HEK293 (cell line): ENCODE measurements at regions of chr1 and their contacts with region 1.

Region 1: GRCh38 chr1:161225534-161226319 is at the start of gene TOMM40L:
- H3K4me3 ChIP-seq: peak within 1 kb of the TSS; percentile 84
- H3K27ac ChIP-seq: peak within 1 kb of the TSS; percentile 26; the same call in 1 of the 2 replicates
- H3K4me1 ChIP-seq: peaks cover 4% of the 10 kb centered on the region; the same call in 1 of the 2 replicates
- CTCF ChIP-seq: peak; percentile 74

Region 2: DNA sequence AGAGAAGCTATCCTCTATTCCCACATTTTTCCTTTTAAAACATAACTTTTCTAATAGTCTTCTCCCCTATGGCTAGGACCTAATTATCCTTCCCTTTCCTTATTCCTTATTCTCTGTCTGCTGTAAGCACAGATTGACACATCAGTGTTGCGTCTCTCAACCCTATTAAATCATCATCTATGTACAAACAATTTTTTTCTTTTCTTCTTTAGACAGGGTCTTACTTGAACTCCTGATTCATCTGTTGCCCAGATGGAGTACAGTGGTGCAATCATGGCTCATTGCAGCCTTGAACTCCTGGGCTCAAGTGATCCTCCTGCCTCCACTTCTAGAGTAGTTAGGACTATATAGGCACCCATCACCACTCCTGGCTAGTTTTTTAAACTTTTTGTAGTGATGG is 119.3 kb before region 1 on chr1:
- CTCF ChIA-PET with region 1: no interaction called
- POLR2A ChIA-PET with region 1: no interaction called
- H3K4me3 ChIP-seq: no peak overlapping the region
- H3K27ac ChIP-seq: no peak overlapping the region
- H3K4me1 ChIP-seq: no peaks in the 10 kb centered on the region
- CTCF ChIP-seq: no peak

Region 3: DNA sequence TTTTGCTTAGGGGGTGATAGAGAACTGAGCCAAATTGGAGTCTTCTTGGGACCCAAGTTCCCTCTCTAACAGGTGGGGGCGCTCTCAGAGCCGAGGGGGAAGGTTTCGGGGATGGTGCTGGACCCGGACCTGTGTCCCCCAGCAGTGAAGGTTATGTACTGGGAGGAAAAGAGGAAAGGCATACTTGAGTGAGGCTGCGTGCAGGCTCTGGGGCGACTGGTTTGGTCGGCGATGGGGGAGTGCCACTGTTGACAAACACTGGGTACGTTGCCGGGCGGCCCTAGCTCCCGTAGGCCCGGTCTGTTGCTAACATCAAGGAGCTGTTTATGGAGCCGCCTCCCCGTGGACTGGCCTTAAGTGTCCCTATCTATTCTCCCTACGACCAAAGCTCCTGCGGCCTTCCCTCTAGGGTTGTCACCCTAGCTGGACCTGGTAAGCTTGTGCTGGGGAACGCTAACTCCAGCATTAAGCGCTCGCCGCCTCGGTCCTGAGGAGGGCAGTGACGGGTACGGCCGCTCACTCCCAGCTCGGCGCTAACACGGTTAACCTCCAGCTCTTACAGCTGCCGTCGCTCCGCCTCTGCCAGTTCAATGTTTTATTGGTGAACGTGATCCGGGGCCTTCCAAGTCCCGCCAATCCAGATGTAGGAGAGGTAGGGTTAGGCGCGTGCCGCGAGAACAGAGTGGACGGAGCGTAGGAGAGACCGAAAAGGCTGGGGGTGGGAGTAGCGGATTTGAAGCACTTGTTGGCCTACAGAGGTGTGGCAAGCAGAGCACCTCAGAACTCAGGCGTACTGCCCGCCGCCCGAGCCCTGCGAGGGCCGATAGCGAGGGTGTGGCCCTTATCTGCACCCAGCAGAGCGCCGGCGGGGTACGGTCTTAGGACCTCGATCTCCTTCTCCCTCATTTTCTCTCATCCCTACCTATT is 59.7 kb before region 1 on chr1 and contains the start of gene PPOX:
- CTCF ChIA-PET with region 1: interaction called, 4 read pairs
- POLR2A ChIA-PET with region 1: interaction called, 13 read pairs
- H3K4me3 ChIP-seq: peak within 1 kb of the TSS; percentile 58
- H3K27ac ChIP-seq: peak within 1 kb of the TSS; percentile 39; the same call in 1 of the 2 replicates
- H3K4me1 ChIP-seq: peaks cover 3% of the 10 kb centered on the region; the same call in 1 of the 2 replicates
- CTCF ChIP-seq: peak; percentile 70

Region 4: DNA sequence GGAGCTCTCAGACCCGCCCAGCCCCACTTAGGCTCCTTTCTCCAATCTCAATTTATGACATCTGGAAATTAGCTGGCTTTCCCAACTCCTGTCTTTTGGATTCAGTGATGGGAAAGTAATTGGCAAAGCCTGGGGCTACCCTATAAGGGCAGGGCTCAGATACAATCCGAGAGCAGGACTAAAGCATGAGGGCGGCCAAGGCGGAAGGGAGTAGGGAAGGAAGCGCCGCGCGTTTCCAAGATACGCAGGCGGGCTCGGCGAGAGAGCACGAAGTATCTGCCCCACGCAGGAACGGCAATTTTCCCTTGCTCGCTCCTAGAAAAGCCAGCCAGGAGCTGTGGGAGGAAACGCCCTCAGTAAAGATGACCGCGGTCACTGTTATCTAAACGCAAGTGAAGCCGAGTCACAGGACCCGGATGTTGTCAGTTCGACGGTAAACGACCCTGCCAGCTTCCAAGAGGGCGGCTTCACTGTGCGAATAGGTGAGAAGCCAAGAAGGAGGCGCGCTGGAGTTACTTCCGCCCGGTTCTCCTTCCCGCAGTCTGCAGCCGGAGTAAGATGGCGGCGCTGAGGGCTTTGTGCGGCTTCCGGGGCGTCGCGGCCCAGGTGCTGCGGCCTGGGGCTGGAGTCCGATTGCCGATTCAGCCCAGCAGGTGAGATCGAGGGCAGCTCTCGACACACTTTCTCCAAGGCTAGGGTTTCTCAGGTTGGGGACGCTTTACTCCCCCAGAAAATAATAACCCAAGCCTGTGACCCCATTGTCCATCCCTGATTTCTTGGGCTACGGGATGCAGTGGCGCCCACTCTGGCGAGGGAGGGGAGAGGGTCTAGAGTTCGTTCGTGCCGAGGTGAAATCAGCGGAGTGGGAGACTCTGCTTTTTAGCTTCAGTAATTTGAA is 23.6 kb before region 1 on chr1 and contains the start of gene NDUFS2:
- CTCF ChIA-PET with region 1: interaction called, 82 read pairs
- POLR2A ChIA-PET with region 1: interaction called, 22 read pairs
- H3K4me3 ChIP-seq: peak within 1 kb of the TSS; percentile 56
- H3K27ac ChIP-seq: peak within 1 kb of the TSS; percentile 72
- H3K4me1 ChIP-seq: peaks cover 9% of the 10 kb centered on the region; the same call in 1 of the 2 replicates
- CTCF ChIP-seq: peak; percentile 79

Region 5: DNA sequence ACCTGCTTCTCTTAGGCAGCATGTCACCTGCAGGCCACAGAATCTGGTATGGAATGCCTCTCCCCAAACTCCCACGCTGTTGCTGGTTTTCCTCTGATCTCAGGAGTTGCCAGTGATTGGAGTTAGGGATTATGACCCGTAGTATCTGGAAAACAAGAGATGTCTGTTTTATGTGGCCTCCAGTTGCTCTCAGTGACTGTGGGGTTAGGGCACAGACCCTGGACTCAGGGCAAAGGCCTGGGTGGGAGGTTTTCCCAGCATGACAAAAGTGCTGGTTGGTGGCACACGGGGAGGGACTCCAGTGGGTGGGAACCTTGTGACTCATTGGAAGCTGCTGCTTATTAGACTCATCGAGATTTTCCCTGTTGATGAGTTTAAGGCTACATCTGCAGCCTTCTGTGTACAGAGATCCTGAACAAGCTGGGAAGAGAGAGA is 12.3 kb after region 1 on chr1 and contains the start of gene NR1I3:
- CTCF ChIA-PET with region 1: interaction called, 57 read pairs
- POLR2A ChIA-PET with region 1: interaction called, 8 read pairs
- H3K4me3 ChIP-seq: no peak within 1 kb of the TSS
- H3K27ac ChIP-seq: no peak within 1 kb of the TSS
- H3K4me1 ChIP-seq: no peaks in the 10 kb centered on the region
- CTCF ChIP-seq: no peak

Region 6: DNA sequence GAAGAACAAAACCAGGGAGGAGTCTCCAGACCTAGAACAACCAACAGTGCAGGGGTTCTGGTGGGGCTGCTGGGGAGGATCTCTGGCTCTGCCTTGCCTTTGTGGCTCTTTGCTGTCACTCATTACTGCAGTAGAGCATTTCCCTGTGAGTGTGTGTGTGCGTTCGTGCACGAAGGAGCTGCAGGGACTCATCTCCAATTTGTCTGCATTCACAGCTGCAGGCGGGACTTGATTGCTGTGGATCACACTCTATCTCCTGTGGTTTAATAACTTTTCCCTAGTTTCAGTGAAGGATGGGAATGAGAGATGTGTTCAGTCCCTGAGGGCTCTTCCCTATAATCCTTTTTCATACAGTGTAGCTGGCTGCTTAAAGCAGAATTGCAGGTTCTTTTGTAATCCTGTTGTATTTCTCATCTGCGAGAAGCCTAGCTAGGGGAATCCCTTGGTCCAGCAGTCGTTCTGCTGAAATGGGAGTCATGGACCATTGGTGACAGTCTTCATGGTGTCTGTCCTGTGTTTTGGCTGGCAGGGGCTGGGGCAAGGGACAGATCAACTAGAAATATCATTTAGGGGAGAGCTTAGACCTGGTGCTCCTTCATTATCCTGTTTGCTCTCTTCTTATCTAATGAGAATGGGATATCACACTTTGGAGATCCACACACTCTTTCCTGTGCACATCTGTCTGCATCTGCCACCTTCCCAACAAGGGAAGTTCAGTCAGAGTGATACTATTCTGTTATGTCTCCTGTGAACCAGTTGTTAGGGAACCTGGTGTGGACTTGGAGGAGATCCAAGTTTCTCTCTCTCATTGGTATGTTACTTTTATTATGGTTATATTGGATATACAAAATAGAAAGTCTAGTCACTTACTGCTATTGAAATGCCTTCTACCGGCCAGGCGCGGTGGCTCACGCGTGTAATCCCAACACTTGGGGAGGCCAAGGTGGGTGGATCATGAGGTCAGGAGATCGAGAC is 35.8 kb after region 1 on chr1:
- CTCF ChIA-PET with region 1: interaction called, 11 read pairs
- POLR2A ChIA-PET with region 1: interaction called, 3 read pairs
- H3K4me3 ChIP-seq: no peak overlapping the region
- H3K27ac ChIP-seq: no peak overlapping the region
- H3K4me1 ChIP-seq: peaks cover 10% of the 10 kb centered on the region; the same call in 1 of the 2 replicates
- CTCF ChIP-seq: no peak

Region 7: DNA sequence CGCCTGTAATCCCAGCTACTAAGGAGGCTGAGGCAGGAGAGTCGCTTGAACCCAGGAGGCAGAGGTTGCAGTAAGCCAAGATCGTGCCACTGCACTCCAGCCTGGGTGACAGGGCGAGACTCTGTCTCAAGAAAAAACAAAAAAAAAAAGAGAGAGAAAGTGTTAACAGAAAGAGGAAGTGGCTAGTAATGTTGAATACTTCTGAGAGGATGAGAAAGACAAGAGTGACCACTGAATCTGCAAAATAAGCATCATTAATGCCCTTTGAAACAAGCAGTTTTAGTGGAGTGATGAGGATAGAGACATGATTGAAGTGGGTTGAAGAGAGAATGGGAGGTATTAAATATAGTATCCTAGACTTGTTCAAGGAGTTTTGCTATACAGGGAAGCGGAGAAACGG is 72.4 kb after region 1 on chr1:
- CTCF ChIA-PET with region 1: interaction called, 11 read pairs
- POLR2A ChIA-PET with region 1: no interaction called
- H3K4me3 ChIP-seq: no peak overlapping the region
- H3K27ac ChIP-seq: no peak overlapping the region
- H3K4me1 ChIP-seq: no peaks in the 10 kb centered on the region
- CTCF ChIP-seq: no peak

Region 8: GRCh38 chr1:161367684-161368400 is 142.1 kb after region 1 on chr1 and contains the start of gene CFAP126:
- CTCF ChIA-PET with region 1: no interaction called
- POLR2A ChIA-PET with region 1: no interaction called
- H3K4me3 ChIP-seq: no peak within 1 kb of the TSS
- H3K27ac ChIP-seq: no peak within 1 kb of the TSS
- H3K4me1 ChIP-seq: 0 out of 2 replicates have a peak, but pooled peaks cover 2% of the 10 kb centered on the region
- CTCF ChIP-seq: no peak

Region 9: GRCh38 chr1:161382214-161383019 is 156.7 kb after region 1 on chr1:
- CTCF ChIA-PET with region 1: interaction called, 146 read pairs
- POLR2A ChIA-PET with region 1: interaction called, 4 read pairs
- H3K4me3 ChIP-seq: no peak overlapping the region
- H3K27ac ChIP-seq: no peak overlapping the region
- H3K4me1 ChIP-seq: no peaks in the 10 kb centered on the region
- CTCF ChIP-seq: 0 out of 2 replicates have a peak, but pooled peaks have one; percentile 13